ENCODE measurements at regions of chr4 and their contacts with region 1.

Region 1: GRCh38 chr4:108560616-108561015 is 59.8 kb upstream of the RPL34 start:
- DNase-seq: peak in 1 of 2 donors; percentile 72
- ATAC-seq: peak; percentile 84 to 97 (median 90)
- H3K4me3 ChIP-seq: no peak overlapping the region
- H3K27ac ChIP-seq: peak overlapping the region in 9 of 10 donors; percentile 35 to 78 (median 70)
- H3K4me1 ChIP-seq: peaks cover 0 to 28% (median 9%) of the 10 kb centered on the region in 9 donors
- H3K27me3 ChIP-seq: no peaks in the 10 kb centered on the region
- CTCF ChIP-seq: no peak

Region 2: DNA sequence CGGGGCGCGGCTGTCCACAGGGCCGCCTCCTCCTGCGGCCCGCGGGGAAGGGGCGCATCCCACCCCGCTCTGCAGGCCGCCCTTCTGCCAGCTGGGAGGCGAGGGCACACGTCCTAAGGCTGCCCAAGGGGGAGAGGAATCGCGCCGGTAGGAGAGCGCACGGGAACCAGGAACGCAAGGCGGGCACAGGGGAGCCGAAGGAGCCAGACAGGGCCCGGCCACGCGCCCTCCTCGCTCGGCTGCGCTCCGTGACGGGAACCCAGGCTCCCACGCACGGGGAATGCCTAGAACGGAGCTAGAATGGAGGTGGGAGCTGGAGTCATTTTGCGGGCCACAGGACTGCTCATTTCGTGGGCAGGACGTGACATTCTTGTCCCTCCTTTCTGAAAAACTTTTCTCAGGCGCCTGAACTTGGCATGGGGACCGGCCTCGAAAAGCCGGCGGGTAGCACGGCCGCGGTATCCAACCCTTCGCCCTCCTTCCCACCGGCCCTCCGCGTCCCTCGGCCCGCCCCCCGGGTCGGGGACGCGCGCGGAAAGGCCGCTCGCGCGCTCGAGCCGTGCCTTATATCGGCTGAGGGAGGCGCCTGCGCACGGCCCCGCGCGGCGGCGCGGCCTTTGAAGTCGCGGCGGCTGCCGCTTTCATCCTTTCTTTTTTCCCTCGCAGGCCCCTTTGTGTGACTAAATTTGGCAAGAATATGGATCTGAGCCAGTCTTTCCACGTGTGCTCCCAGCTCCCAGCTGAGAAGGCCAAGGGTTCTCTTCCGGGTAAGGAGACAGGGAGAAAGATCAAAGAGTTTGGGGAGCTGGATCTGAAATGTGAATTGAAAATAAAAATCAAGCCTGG is 387.6 kb before region 1 on chr4:
- intact Hi-C with region 1: loop called in 1 of 10 experiments (anchors 10 kb)
- DNase-seq: peak; percentile 15 to 28
- ATAC-seq: peak; percentile 58 to 88 (median 82)
- H3K4me3 ChIP-seq: peak overlapping the region; percentile 41 to 64 (median 58)
- H3K27ac ChIP-seq: peak overlapping the region in 5 of 10 donors; percentile 48 to 66 (median 52)
- H3K4me1 ChIP-seq: peaks cover 3 to 45% (median 30%) of the 10 kb centered on the region in 9 donors
- H3K27me3 ChIP-seq: peaks cover 19 to 90% (median 77%) of the 10 kb centered on the region in 7 donors
- CTCF ChIP-seq: no peak

Region 3: DNA sequence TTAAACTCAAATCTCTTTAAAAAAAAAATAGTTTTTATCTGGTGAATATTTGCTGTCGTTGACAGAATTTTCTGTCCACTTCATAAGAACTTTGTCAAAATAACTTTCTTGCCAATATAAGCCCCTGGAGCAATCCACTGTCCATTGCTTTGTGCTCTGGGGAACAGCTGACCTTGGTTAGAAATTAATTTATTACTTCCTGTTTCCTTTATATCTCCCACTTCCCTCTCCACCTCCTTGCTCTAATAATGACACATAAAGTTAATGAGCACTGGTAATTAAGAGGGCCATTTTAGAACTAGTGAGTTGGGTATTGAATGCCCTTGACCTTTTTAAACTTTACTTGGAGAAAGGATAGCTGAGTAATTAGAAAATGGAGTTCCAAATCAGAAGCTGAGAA is 240.6 kb before region 1 on chr4:
- intact Hi-C with region 1: no loop called
- DNase-seq: no peak
- ATAC-seq: no peak
- H3K4me3 ChIP-seq: no peak overlapping the region
- H3K27ac ChIP-seq: no peak overlapping the region
- H3K4me1 ChIP-seq: no peaks in the 10 kb centered on the region
- H3K27me3 ChIP-seq: peaks cover 0 to 5% (median 0%) of the 10 kb centered on the region in 7 donors
- CTCF ChIP-seq: no peak

Region 4: GRCh38 chr4:108544481-108544880 is 16.1 kb before region 1 on chr4:
- intact Hi-C with region 1: loop called in 1 of 10 experiments (anchors 1 kb)
- DNase-seq: no peak
- ATAC-seq: no peak
- H3K4me3 ChIP-seq: no peak overlapping the region
- H3K27ac ChIP-seq: no peak overlapping the region
- H3K4me1 ChIP-seq: no peaks in the 10 kb centered on the region
- H3K27me3 ChIP-seq: no peaks in the 10 kb centered on the region
- CTCF ChIP-seq: no peak

Measured in heart right ventricle (tissue), 16 donors.